SK-N-SH (cell line): ENCODE measurements at regions of chr1 and their contacts with region 1.

Region 1: DNA sequence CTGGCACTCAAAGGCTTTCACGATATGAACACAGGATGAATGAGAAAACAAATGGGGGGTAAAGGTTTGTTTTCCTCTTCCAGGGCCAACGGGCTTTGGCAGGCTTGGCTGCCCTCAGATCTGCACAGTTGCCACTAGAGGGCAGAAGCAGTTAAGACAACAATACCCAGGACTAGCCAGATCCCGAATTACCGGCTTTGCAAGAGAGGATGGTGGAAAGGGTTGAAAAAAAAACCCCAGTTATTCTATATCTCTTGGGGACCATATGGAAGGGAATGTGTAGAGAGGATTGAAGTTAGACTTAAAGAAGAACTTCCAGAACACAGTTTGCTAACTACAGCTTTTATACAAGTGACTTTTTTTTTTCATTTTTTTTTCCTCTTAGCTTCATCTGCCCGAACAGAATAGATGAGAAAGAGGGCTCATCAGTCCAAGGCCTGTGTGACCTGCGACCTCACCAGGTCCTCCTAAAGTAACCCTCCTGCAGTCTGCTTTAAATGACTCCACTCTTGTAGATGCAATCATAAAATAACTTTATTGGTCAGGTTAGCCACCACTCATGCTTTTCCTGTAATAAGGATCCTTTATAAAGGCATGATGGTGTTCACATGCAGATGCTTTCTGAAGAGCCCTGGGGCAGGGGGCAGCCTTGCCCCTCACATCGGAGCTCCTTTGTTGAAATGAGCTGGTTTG is 10.7 kb downstream of the FMOD start:
- DNase-seq: peak; percentile 90
- H3K4me3 ChIP-seq: no peak overlapping the region
- H3K27ac ChIP-seq: no peak overlapping the region
- H3K4me1 ChIP-seq: peaks cover 0 to 11% of the 10 kb centered on the region in 2 experiments; a peak in 2 of 4 replicates
- H3K27me3 ChIP-seq: peaks cover 35% of the 10 kb centered on the region; the same call in 1 of the 2 replicates
- CTCF ChIP-seq: peak; percentile 96
- EP300 ChIP-seq: peak in 1 of 2 experiments; percentile 45; a peak in 2 of 4 replicates
- RAD21 ChIP-seq: peak; percentile 98

Region 2: GRCh38 chr1:203299169-203299568 is 41.1 kb before region 1 on chr1:
- CTCF ChIA-PET with region 1: interaction called, 12 read pairs
- POLR2A ChIA-PET with region 1: no interaction called
- DNase-seq: no peak
- H3K4me3 ChIP-seq: no peak overlapping the region
- H3K27ac ChIP-seq: no peak overlapping the region
- H3K4me1 ChIP-seq: peaks cover 0 to 19% of the 10 kb centered on the region in 2 experiments; a peak in 3 of 4 replicates
- H3K27me3 ChIP-seq: peaks cover 9% of the 10 kb centered on the region; the same call in 1 of the 2 replicates
- CTCF ChIP-seq: no peak
- EP300 ChIP-seq: no peak
- RAD21 ChIP-seq: no peak

Region 3: DNA sequence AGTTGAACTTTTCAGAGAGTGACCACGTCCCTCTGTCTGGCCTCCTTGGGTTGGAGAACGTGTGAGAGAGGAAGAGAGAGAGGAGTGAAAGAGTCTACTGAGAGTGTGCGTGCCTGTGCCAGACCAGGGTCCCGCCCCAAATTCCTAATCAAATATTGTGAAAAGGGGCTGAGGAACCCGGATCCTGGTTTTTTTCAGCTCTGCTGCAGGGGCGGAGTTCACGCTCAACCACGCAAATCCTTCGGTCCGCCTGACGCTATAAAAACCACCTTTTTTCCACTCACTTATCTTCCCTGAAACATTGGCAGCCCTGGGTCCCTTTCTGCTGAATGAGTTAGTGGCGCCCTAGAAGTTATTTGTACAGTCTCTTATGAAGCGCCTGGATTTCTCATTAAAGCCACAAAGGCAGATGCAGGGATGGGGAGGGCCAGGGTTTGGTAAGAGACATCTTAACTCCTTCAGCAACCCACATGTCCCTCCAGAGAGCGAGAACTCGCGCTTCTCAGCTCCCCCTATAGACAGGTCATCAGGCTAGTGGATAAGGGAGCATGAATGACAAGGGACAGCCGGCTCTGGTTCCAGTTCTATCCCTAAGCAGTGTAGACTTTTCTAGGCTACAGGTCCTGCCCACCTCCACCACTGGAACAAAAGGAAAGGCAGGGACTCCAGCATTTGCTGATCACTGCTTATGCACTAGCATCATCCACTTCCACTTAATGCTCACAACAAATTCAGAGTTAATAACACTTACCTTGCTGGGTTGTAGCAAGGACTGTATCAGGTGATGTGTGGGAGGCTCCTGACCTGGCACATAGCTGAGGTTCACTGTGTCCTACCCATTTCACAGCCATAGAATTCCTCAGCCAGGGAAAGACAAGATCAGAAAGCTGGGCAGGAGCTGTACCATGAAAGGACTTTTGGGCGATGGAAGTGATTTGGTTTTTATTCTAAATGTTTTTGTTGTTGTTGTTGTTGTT is 11.1 kb after region 1 on chr1 and contains the start of gene FMOD:
- CTCF ChIA-PET with region 1: interaction called, 151 read pairs
- POLR2A ChIA-PET with region 1: no interaction called
- DNase-seq: no peak
- H3K4me3 ChIP-seq: no peak within 1 kb of the TSS
- H3K27ac ChIP-seq: no peak within 1 kb of the TSS
- H3K4me1 ChIP-seq: no peaks in the 10 kb centered on the region
- H3K27me3 ChIP-seq: peaks cover 55% of the 10 kb centered on the region; the same call in 1 of the 2 replicates
- CTCF ChIP-seq: no peak
- EP300 ChIP-seq: no peak
- RAD21 ChIP-seq: no peak
- polyA plus RNA-seq, gene FMOD: not detected in 2 replicates

Region 4: DNA sequence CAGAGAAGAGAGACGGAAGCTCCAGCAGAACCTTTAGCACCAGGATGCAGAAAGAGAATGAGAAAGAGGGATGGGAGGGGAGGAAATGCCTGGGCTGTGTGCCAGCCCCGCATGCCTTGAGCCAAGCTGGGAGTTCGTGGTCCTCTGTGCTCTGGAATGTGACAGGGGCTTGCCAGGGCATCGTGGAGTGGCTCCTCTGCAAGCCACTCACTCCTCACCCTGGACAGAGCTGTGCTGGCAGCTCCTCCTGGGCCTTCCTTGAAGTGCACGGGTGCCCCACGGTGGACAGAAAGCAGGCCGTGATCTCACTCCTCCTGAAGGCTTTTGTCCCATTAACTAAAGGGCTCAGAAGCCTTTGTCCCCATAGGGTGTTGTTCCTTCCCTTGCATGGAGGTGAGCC is 100.5 kb after region 1 on chr1:
- CTCF ChIA-PET with region 1: interaction called, 171 read pairs
- POLR2A ChIA-PET with region 1: no interaction called
- DNase-seq: peak; percentile 61
- H3K4me3 ChIP-seq: no peak overlapping the region
- H3K27ac ChIP-seq: no peak overlapping the region
- H3K4me1 ChIP-seq: peaks cover 6 to 14% of the 10 kb centered on the region in 2 experiments; a peak in 2 of 4 replicates
- H3K27me3 ChIP-seq: no peaks in the 10 kb centered on the region
- CTCF ChIP-seq: peak; percentile 68
- EP300 ChIP-seq: no peak
- RAD21 ChIP-seq: peak; percentile 82

Region 5: GRCh38 chr1:203480525-203481084 is 140.3 kb after region 1 on chr1:
- CTCF ChIA-PET with region 1: interaction called, 351 read pairs
- POLR2A ChIA-PET with region 1: interaction called, 3 read pairs
- DNase-seq: peak; percentile 68
- H3K4me3 ChIP-seq: no peak overlapping the region
- H3K27ac ChIP-seq: peak overlapping the region; percentile 79 to 80
- H3K4me1 ChIP-seq: peaks cover 11 to 18% of the 10 kb centered on the region in 2 experiments; a peak in 2 of 4 replicates
- H3K27me3 ChIP-seq: no peaks in the 10 kb centered on the region
- CTCF ChIP-seq: no peak
- EP300 ChIP-seq: peak in 1 of 2 experiments; percentile 39; a peak in 1 of 4 replicates
- RAD21 ChIP-seq: no peak

Region 6: DNA sequence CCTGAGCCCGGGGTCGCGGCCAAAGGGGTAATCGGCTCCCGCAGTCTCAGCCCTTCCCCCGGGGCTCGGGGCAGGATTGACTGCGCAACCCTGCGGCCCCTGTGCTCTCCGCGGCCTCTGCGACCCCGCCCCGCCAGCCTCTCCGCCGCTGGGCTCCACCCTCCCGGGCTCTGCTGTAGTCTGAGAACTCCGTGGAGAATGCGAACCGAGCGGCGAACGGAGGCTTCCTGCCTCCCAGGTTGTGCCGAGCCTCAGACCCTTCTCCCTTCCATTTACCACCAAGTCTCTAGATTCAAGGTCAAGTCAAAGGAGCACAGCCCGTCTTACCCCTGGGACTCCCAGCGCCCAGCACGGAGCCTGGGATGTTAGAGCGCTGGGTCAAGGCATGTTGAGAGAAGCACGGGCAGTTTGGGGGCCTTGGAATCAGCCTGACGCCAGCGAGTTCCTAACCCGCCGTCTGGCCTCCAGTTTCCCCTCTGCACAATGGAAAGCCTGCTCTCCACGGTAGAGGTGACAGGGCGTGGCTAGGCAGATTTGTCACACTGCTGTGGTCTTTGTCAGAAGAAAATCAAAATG is 289.3 kb after region 1 on chr1:
- CTCF ChIA-PET with region 1: no interaction called
- POLR2A ChIA-PET with region 1: no interaction called
- DNase-seq: no peak
- H3K4me3 ChIP-seq: peak overlapping the region in 1 of 2 experiments; percentile 98; a peak in 3 of 4 replicates
- H3K27ac ChIP-seq: no peak overlapping the region
- H3K4me1 ChIP-seq: peaks cover 25 to 28% of the 10 kb centered on the region in 2 experiments; a peak in 3 of 4 replicates
- H3K27me3 ChIP-seq: no peaks in the 10 kb centered on the region
- CTCF ChIP-seq: no peak
- EP300 ChIP-seq: no peak
- RAD21 ChIP-seq: no peak

Region 7: GRCh38 chr1:203702130-203702577 is 361.9 kb after region 1 on chr1:
- CTCF ChIA-PET with region 1: interaction called, 80 read pairs
- POLR2A ChIA-PET with region 1: no interaction called
- DNase-seq: peak; percentile 74
- H3K4me3 ChIP-seq: no peak overlapping the region
- H3K27ac ChIP-seq: peak overlapping the region in 1 of 2 experiments; percentile 47; a peak in 1 of 4 replicates
- H3K4me1 ChIP-seq: no peaks in the 10 kb centered on the region
- H3K27me3 ChIP-seq: no peaks in the 10 kb centered on the region
- CTCF ChIP-seq: peak; percentile 91
- EP300 ChIP-seq: no peak
- RAD21 ChIP-seq: peak; percentile 98